Sigmoid colon (tissue), 7 donors: ENCODE measurements at regions of chr4 and their contacts with region 1.

Region 1: DNA sequence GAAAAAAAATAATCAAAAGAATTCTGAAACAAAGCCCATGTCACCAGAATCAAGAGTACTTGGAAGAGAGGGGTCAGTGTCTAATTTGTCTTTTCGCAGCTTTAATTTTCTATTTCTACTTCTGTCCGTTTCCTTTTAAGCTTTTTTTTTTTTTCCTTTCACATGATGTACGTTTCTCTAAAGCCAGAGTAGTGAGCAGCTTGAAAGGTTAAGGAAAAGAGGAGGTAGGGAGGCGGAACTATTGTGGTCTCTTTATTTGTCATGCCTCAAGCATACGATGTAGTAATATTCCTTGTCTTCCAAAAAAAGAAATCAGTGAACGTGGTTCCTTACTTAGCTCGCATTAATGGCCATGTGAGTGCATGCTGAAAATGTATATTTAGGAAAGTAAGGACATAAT is 311.5 kb downstream of the TENM3 start:
- DNase-seq: no peak
- H3K4me3 ChIP-seq: peak overlapping the region in 2 of 4 donors; percentile 28 to 29
- H3K27ac ChIP-seq: peak overlapping the region in 2 of 4 donors; percentile 37 to 68
- H3K4me1 ChIP-seq: peaks cover 0 to 37% (median 17%) of the 10 kb centered on the region in 4 donors
- H3K27me3 ChIP-seq: no peaks in the 10 kb centered on the region
- CTCF ChIP-seq: no peak
- EP300 ChIP-seq: no peak
- POLR2A ChIP-seq: no peak

Region 2: DNA sequence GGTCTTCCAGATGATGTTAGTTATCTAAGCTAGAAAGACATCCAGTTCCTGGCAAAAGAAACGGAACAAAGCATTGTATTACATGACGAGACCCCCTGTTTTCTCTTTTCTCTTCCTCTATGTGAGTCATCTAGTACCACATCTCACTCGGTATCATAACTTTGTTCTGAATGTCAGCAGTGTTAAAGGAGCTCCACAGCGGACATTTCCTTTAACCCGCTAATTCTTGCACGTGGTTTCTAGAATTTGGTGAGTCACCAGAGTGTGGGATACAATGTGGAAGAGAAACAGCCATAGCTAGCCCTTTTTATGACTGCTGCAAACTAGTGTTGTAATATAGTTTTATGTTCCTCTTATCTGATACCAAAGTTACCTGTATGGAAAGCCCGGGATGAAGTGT is 67.9 kb before region 1 on chr4:
- intact Hi-C with region 1: loop called (anchors 5 kb)
- DNase-seq: no peak
- H3K4me3 ChIP-seq: no peak overlapping the region
- H3K27ac ChIP-seq: no peak overlapping the region
- H3K4me1 ChIP-seq: peaks cover 0 to 31% (median 8%) of the 10 kb centered on the region in 4 donors
- H3K27me3 ChIP-seq: no peaks in the 10 kb centered on the region
- CTCF ChIP-seq: no peak
- EP300 ChIP-seq: no peak
- POLR2A ChIP-seq: no peak